HCT116 (cell line): ENCODE measurements at regions of chr22 and their contacts with region 1.

Region 1: DNA sequence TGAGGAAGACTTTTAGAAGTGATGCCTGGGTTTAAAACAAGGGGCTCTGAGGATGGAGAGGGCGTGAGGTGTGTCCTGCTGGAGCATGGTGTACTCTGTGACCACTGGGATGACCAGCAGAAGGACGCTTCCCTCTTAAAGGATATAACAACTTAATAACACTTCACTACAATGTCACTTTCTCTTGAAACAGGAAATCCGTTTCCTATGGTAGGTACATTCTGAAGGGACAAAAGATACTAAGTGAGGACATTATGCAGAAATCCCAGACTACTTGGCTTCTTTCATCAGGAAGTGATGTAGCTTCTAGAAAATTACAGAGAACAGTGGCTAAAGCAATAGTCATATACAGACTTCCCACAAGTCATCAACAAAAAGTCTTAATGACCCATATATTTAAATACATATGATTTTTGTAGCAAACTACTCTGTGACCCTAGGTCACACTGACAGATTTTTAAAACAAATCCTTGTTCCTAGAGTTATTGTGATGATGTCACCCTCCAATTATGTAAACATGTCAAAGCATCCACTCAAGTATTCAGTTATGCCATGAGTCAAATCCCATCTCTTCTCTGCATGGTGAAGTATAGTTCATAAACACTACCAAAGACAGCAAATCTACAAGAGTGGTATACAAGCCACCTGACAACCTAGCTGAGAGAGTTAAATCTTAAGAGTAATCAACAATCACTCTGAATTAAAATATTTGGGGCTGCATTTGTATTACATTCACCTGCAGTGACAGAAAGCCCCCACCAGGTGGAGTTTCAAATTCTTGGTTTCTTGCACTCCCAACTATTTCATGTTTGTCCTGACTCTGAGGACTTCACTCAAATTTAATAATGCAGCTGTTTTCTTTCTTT is 32.8 kb downstream of the PITPNB start:
- DNase-seq: peak; percentile 8
- ATAC-seq: peak; percentile 64
- H3K4me3 ChIP-seq: no peak overlapping the region
- H3K27ac ChIP-seq: no peak overlapping the region
- H3K4me1 ChIP-seq: no peaks in the 10 kb centered on the region; a peak in 1 of 4 replicates
- H3K27me3 ChIP-seq: no peaks in the 10 kb centered on the region
- CTCF ChIP-seq: peak; percentile 34 to 86 (median 79); a peak in 4 of 6 replicates
- POLR2A ChIP-seq: no peak
- RAD21 ChIP-seq: peak; percentile 32; the same call in 1 of the 2 replicates

Region 2: DNA sequence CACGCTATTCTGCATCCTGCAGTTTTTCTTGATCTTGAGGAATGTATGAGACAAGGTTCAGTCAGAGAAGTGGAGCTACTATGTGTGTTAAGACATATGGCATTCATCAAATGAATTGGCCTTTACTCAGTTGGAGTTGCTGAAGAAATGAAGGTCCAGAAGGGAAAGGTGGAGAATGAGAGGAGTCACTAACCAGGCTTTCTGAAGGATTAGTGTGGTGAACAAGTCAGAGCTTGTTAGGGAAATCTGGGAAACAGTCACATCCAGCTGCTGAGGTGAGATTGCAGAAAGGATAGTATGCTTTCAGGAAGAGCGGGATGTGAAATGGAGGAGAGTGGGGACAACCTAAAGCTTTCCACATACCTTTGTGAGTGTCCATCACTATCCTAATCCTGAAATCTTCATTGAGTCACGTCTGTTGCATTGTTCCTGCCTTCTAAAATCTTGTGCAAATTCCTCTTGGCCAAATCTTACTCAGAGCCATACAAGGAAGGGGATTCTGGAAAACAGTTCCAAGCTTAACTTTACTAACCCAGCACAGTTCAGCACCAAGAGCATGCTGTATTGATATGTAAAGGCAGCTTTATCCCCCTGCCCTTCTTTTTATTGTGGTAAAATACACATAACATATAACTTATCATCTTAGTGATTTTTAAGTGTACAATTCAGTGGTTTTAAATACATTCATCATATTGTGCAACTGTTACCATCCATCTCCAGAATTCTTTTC is 44.3 kb after region 1 on chr22:
- CTCF ChIA-PET with region 1: no interaction called
- POLR2A ChIA-PET with region 1: no interaction called
- RAD21 ChIA-PET with region 1: no interaction called
- intact Hi-C with region 1: no loop called
- DNase-seq: no peak
- ATAC-seq: no peak
- H3K4me3 ChIP-seq: no peak overlapping the region
- H3K27ac ChIP-seq: no peak overlapping the region
- H3K4me1 ChIP-seq: no peaks in the 10 kb centered on the region
- H3K27me3 ChIP-seq: no peaks in the 10 kb centered on the region
- CTCF ChIP-seq: no peak
- POLR2A ChIP-seq: no peak
- RAD21 ChIP-seq: no peak

Region 3: GRCh38 chr22:28009272-28009827 is 123.1 kb after region 1 on chr22:
- CTCF ChIA-PET with region 1: interaction called, 15 read pairs
- POLR2A ChIA-PET with region 1: no interaction called
- RAD21 ChIA-PET with region 1: interaction called in 1 of 2 experiments, 3 read pairs
- intact Hi-C with region 1: loop called (anchors 1 kb)
- DNase-seq: peak; percentile 49
- ATAC-seq: peak; percentile 96
- H3K4me3 ChIP-seq: no peak overlapping the region
- H3K27ac ChIP-seq: no peak overlapping the region
- H3K4me1 ChIP-seq: no peaks in the 10 kb centered on the region
- H3K27me3 ChIP-seq: no peaks in the 10 kb centered on the region
- CTCF ChIP-seq: peak; percentile 69 to 99 (median 93)
- POLR2A ChIP-seq: no peak
- RAD21 ChIP-seq: peak; percentile 89